Activated naive CD4-positive, alpha-beta T cell treated with anti-CD3 and anti-CD28 coated beads for 36 hours (primary cell): ENCODE measurements at regions of chr11 and their contacts with region 1.

Region 1: DNA sequence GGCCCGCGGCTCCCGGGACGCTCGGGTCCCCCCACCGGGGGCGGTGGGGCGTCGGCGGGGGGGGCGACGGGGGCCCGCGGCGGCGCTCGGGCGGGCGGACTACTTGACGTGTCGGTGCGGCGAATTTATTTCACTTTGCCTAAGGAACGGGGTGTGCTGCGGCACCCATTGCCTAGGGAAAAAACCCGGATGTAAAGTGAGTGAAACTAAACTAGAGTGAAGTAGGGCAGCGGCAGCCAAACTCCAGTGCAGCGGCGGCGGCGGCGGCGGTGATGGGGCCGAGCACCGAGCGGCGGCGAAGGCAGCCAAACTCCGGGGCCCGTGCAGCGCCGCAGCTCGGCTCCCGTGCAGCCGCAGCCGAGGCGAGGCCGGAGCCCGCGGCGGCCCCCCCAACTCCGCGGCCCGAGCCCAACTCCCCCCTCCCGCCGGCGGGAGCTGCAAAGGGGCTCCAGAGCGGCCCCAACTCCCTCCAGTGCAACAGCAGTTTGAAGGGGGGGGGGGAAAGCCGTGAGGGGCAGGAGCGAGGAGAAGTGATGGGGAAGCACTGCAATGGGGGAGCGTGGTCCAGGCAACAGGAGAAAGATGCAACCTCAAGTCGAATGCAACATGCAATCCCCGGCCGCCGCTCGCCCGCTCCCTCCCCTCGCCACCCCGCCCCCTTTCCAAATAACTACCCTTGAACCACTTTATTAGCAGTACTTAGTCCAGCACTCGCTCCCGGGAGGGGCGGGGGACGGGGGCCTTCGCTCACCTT is 647 bp upstream of the PHF21A start:
- DNase-seq: peak; percentile 79
- H3K4me3 Mint-ChIP-seq: peak overlapping the region; percentile 81
- H3K27ac Mint-ChIP-seq: peak overlapping the region; percentile 85
- H3K4me1 Mint-ChIP-seq: peaks cover 41% of the 10 kb centered on the region
- H3K27me3 Mint-ChIP-seq: no peaks in the 10 kb centered on the region

Region 2: GRCh38 chr11:45804761-45805304 is 317.1 kb before region 1 on chr11 and contains the start of gene SLC35C1:
- CTCF ChIA-PET with region 1: no interaction called
- intact Hi-C with region 1: loop called (anchors 2 kb)
- DNase-seq: peak; percentile 97
- H3K4me3 Mint-ChIP-seq: peak within 1 kb of the TSS; percentile 90
- H3K27ac Mint-ChIP-seq: peak within 1 kb of the TSS; percentile 81
- H3K4me1 Mint-ChIP-seq: peaks cover 36% of the 10 kb centered on the region
- H3K27me3 Mint-ChIP-seq: no peaks in the 10 kb centered on the region
- total RNA-seq, gene SLC35C1: 5.6 to 6.5 TPM

Region 3: DNA sequence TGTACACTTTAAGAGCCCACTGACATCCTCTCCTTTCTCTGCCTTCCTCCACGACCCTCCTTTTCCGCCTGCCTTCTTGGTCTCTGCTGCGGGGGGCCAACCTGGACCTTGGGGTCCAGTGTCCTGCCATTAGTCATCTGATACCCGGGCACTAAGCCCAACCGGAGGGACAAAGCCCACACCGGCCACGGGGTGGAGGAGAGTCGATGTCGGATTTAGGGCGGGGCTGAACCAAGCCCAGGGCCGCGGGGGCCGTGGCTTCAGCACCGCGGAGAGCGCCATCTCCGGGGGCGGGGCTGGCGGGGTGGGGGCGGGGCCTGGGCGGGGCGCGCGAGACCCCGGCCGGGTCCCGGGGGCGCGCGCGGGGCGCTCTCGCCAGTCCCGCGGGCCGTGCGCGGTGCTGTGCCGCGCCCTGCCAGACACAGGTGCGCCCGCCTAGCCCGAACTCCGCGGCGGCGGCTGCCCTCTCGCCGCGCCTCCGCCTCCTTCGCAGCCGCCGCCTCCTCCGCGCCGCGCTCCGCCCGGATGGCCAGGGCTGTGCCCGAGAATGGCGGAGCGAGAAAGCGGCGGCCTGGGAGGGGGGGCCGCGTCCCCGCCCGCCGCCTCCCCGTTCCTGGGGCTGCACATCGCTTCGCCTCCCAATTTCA is 236.5 kb before region 1 on chr11 and contains the start of gene MAPK8IP1:
- CTCF ChIA-PET with region 1: no interaction called
- intact Hi-C with region 1: loop called (anchors 1 kb)
- DNase-seq: peak; percentile 40
- H3K4me3 Mint-ChIP-seq: peak within 1 kb of the TSS; percentile 56
- H3K27ac Mint-ChIP-seq: no peak within 1 kb of the TSS
- H3K4me1 Mint-ChIP-seq: peaks cover 6% of the 10 kb centered on the region
- H3K27me3 Mint-ChIP-seq: peaks cover under 1% of the 10 kb centered on the region
- total RNA-seq, gene MAPK8IP1: 0.22 to 0.57 TPM

Region 4: DNA sequence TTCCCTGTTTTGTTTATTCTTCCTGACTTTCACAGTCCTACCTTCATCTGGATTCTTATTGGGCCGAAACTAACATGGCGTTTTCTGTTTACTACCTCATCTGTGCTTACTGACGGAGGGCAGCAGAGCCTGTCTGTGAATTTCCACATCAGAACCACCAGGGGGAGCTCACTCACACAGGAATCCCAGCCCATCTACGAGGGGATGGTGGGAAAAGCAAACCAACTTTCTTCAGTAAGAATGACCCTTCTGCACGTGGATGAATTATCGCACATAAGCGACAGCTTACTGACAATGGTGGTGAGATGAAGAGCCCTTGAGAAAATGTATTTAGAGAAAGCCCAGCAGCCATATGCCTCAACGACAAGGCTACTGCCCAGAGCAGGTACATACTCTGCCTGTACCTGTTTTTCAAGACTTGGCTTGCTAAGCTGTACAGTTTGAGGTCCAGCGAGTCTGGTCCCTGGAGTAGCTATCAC is 157.0 kb before region 1 on chr11:
- CTCF ChIA-PET with region 1: interaction called, 7 read pairs
- intact Hi-C with region 1: loop called (anchors 2 kb)
- DNase-seq: peak; percentile 72
- H3K4me3 Mint-ChIP-seq: no peak overlapping the region
- H3K27ac Mint-ChIP-seq: no peak overlapping the region
- H3K4me1 Mint-ChIP-seq: no peaks in the 10 kb centered on the region
- H3K27me3 Mint-ChIP-seq: no peaks in the 10 kb centered on the region

Region 5: DNA sequence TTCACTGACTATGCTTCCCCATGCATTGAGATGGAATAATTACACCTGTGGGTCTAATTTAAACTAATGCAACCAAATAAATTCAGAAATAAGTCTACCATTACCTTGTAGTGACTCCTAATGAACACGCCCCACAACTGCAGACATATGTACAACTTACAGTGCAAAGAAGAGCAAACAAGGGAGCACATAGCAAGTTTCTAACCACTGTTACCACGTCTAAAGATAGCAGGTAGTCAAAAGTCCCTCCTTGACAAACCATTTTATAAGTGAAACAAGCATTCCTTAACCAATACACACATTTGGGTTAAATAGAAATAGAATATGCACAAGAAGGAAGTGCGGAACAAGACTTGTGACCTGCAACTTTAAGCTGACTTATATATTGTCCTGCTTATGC is 21.2 kb before region 1 on chr11:
- CTCF ChIA-PET with region 1: interaction called, 3 read pairs
- intact Hi-C with region 1: loop called (anchors 1 kb)
- DNase-seq: no peak
- H3K4me3 Mint-ChIP-seq: no peak overlapping the region
- H3K27ac Mint-ChIP-seq: no peak overlapping the region
- H3K4me1 Mint-ChIP-seq: peaks cover 40% of the 10 kb centered on the region
- H3K27me3 Mint-ChIP-seq: no peaks in the 10 kb centered on the region

Region 6: GRCh38 chr11:46259971-46260560 is 138.2 kb after region 1 on chr11:
- CTCF ChIA-PET with region 1: no interaction called
- intact Hi-C with region 1: no loop called
- DNase-seq: no peak
- H3K4me3 Mint-ChIP-seq: no peak overlapping the region
- H3K27ac Mint-ChIP-seq: no peak overlapping the region
- H3K4me1 Mint-ChIP-seq: no peaks in the 10 kb centered on the region
- H3K27me3 Mint-ChIP-seq: no peaks in the 10 kb centered on the region

Region 7: GRCh38 chr11:46700241-46701077 is 578.6 kb after region 1 on chr11 and contains the starts of genes ARHGAP1 and ZNF408:
- CTCF ChIA-PET with region 1: no interaction called
- intact Hi-C with region 1: loop called (anchors 2 kb)
- DNase-seq: peak; percentile 100
- H3K4me3 Mint-ChIP-seq: peak within 1 kb of the TSS; percentile 97
- H3K27ac Mint-ChIP-seq: peak within 1 kb of the TSS; percentile 97
- H3K4me1 Mint-ChIP-seq: peaks cover 45% of the 10 kb centered on the region
- H3K27me3 Mint-ChIP-seq: no peaks in the 10 kb centered on the region
- total RNA-seq, gene ARHGAP1: 31.2 to 32.6 TPM
- total RNA-seq, gene ZNF408: 7.3 to 7.6 TPM